Activated naive CD4-positive, alpha-beta T cell treated with anti-CD3 and anti-CD28 coated beads, Interleukin-2, amount 10 ng/mL, durations not matched to agents 7 days and 5 days (primary cell): ENCODE measurements at regions of chr10 and their contacts with region 1.

Region 1: GRCh38 chr10:14185316-14186045 is 145.2 kb downstream of the FRMD4A start:
- DNase-seq: peak; percentile 72
- H3K4me3 Mint-ChIP-seq: peak overlapping the region; percentile 62
- H3K27ac Mint-ChIP-seq: peak overlapping the region; percentile 95
- H3K4me1 Mint-ChIP-seq: peaks cover 36% of the 10 kb centered on the region
- H3K27me3 Mint-ChIP-seq: peaks cover 57% of the 10 kb centered on the region

Region 2: GRCh38 chr10:13787015-13787421 is 398.5 kb before region 1 on chr10:
- CTCF ChIA-PET with region 1: interaction called, 11 read pairs
- DNase-seq: peak; percentile 86
- H3K4me3 Mint-ChIP-seq: peak overlapping the region; percentile 71
- H3K27ac Mint-ChIP-seq: peak overlapping the region; percentile 94
- H3K4me1 Mint-ChIP-seq: peaks cover 14% of the 10 kb centered on the region
- H3K27me3 Mint-ChIP-seq: no peaks in the 10 kb centered on the region